ENCODE measurements at regions of chr2 and their contacts with region 1.

Region 1: DNA sequence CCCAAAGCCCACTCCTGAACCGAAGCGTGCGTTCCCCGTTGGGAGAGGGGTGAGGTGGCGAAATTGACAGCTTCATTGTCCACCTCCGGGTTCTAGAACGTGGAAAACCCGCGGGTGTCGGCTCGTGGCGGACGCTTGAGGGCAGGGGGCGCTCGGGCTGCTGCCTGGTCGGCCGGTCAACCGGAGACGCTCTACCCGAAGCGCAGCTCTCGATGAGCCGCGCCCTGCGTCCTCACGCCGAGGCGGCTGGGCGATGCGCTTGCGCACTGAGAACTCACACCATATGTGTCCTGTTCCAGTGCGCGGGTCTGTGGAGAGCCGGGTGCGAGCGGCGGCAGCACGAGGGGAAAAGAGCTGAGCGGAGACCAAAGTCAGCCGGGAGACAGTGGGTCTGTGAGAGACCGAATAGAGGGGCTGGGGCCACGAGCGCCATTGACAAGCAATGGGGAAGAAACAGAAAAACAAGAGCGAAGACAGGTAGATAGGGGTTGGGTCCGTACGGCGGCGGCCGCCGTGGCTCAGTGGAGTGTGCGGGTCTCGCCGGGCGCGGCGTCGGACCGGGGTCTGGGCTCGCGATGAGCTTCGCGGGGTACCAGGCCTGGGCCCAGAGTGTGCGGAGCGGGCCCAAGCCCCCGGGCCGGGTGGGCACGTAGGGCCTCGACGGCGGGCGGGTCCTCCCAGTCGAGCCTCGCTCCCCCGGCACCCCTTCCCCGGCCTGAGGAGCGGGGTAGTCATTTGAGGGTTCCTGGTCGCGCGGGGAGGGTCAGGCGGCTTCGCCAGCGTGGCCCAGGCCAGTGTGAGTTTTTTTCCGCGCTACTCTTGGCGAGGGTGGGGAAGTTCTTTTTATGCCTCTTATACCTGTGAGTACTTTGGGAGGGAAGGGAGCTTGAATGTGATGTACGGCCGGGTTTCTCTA is at the start of gene EIF5B:
- DNase-seq: peak; percentile 95
- ATAC-seq: peak; percentile 71
- H3K4me3 Mint-ChIP-seq: no peak within 1 kb of the TSS
- H3K27ac Mint-ChIP-seq: no peak within 1 kb of the TSS
- H3K4me1 Mint-ChIP-seq: peaks cover 47% of the 10 kb centered on the region
- H3K27me3 Mint-ChIP-seq: no peaks in the 10 kb centered on the region
- total RNA-seq, gene EIF5B: 79.0 to 95.4 TPM

Region 2: GRCh38 chr2:97718051-97718882 is 1619.1 kb before region 1 on chr2:
- CTCF ChIA-PET with region 1: no interaction called
- POLR2A ChIA-PET with region 1: no interaction called
- intact Hi-C with region 1: loop called in 1 of 2 experiments (anchors 10 kb)
- DNase-seq: peak; percentile 86
- ATAC-seq: peak; percentile 77
- H3K4me3 Mint-ChIP-seq: peak overlapping the region; percentile 71
- H3K27ac Mint-ChIP-seq: peak overlapping the region; percentile 95
- H3K4me1 Mint-ChIP-seq: peaks cover 68% of the 10 kb centered on the region
- H3K27me3 Mint-ChIP-seq: no peaks in the 10 kb centered on the region

Region 3: GRCh38 chr2:98280376-98281102 is 1056.8 kb before region 1 on chr2:
- CTCF ChIA-PET with region 1: no interaction called
- POLR2A ChIA-PET with region 1: no interaction called
- intact Hi-C with region 1: no loop called
- DNase-seq: no peak
- ATAC-seq: no peak
- H3K4me3 Mint-ChIP-seq: no peak overlapping the region
- H3K27ac Mint-ChIP-seq: no peak overlapping the region
- H3K4me1 Mint-ChIP-seq: no peaks in the 10 kb centered on the region
- H3K27me3 Mint-ChIP-seq: peaks cover 25% of the 10 kb centered on the region

Region 4: DNA sequence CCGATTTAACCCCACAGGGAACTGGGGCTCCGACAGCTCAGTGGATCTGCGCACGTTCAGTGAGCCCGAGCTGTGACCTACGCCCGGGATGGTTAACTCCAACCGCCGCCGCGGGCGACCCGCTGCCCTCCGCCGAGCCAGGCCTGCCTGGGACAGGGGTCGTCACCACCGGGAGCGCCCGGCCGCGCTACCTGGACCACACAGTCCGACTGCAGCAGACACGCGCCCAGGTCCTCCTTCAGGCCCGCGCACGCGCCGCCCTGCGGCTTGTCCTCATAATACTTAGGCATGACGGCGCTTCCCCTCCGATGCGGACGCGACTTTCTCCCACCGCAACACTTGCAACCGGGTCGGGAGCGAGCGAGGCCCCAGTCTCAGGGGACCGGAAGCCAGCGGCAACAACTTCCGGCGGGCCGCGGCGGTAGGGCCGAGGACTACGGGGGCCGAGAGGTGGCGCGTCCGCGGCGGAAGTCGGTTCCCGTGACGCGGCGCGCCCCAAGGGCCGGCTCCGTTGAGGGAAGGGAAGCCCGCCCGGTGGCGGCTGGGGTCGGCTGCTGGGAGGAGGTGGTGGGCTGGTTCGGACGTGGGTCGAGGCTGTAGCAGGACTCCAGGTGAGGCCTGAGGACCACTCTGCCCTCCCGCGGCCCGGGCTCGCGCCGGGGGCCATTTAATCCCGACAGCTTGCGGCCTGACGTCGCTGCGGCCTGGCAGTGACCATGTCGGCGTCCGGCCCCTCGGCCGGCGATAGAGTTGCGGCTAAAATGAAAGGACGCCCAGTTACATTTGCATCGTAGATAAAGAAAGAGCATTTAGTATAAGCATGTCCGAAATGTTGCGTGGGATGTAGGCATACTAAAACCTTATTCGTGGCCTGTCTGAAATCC is 729.0 kb before region 1 on chr2 and contains the starts of genes COA5 and UNC50:
- CTCF ChIA-PET with region 1: no interaction called
- POLR2A ChIA-PET with region 1: no interaction called
- intact Hi-C with region 1: loop called (anchors 1 to 5 kb)
- DNase-seq: peak; percentile 95
- ATAC-seq: peak; percentile 91
- H3K4me3 Mint-ChIP-seq: peak within 1 kb of the TSS; percentile 83
- H3K27ac Mint-ChIP-seq: peak within 1 kb of the TSS; percentile 94
- H3K4me1 Mint-ChIP-seq: peaks cover 61% of the 10 kb centered on the region
- H3K27me3 Mint-ChIP-seq: no peaks in the 10 kb centered on the region
- total RNA-seq, gene COA5: 17.7 to 33.2 TPM
- total RNA-seq, gene UNC50: 21.1 to 31.4 TPM

Region 5: GRCh38 chr2:99154643-99155536 is 182.5 kb before region 1 on chr2 and contains the starts of genes LIPT1 and TSGA10:
- CTCF ChIA-PET with region 1: interaction called, 3 read pairs
- POLR2A ChIA-PET with region 1: interaction called, 6 read pairs
- intact Hi-C with region 1: loop called (anchors 1 kb)
- DNase-seq: peak; percentile 96
- ATAC-seq: peak; percentile 94
- H3K4me3 Mint-ChIP-seq: no peak within 1 kb of the TSS
- H3K27ac Mint-ChIP-seq: peak within 1 kb of the TSS; percentile 93
- H3K4me1 Mint-ChIP-seq: peaks cover 36% of the 10 kb centered on the region
- H3K27me3 Mint-ChIP-seq: no peaks in the 10 kb centered on the region
- total RNA-seq, gene LIPT1: 4.6 to 4.7 TPM
- total RNA-seq, gene TSGA10: 6.4 to 9.4 TPM

Region 6: GRCh38 chr2:99377879-99378278 is 40.5 kb after region 1 on chr2:
- CTCF ChIA-PET with region 1: interaction called, 4 read pairs
- POLR2A ChIA-PET with region 1: no interaction called
- intact Hi-C with region 1: loop called in 1 of 2 experiments (anchors 1 kb)
- DNase-seq: no peak
- ATAC-seq: peak; percentile 87
- H3K4me3 Mint-ChIP-seq: no peak overlapping the region
- H3K27ac Mint-ChIP-seq: peak overlapping the region; percentile 65
- H3K4me1 Mint-ChIP-seq: peaks cover 40% of the 10 kb centered on the region
- H3K27me3 Mint-ChIP-seq: no peaks in the 10 kb centered on the region

Region 7: GRCh38 chr2:99404039-99404794 is 66.8 kb after region 1 on chr2:
- CTCF ChIA-PET with region 1: no interaction called
- POLR2A ChIA-PET with region 1: no interaction called
- intact Hi-C with region 1: no loop called
- DNase-seq: no peak
- ATAC-seq: no peak
- H3K4me3 Mint-ChIP-seq: no peak overlapping the region
- H3K27ac Mint-ChIP-seq: peak overlapping the region; percentile 49
- H3K4me1 Mint-ChIP-seq: peaks cover 11% of the 10 kb centered on the region
- H3K27me3 Mint-ChIP-seq: no peaks in the 10 kb centered on the region

Region 8: GRCh38 chr2:101001691-101002561 is 1664.6 kb after region 1 on chr2 and contains the start of gene RPL31:
- CTCF ChIA-PET with region 1: no interaction called
- POLR2A ChIA-PET with region 1: no interaction called
- intact Hi-C with region 1: loop called in 1 of 2 experiments (anchors 2 kb)
- DNase-seq: peak; percentile 98
- ATAC-seq: peak; percentile 95
- H3K4me3 Mint-ChIP-seq: peak within 1 kb of the TSS; percentile 99
- H3K27ac Mint-ChIP-seq: peak within 1 kb of the TSS; percentile 97
- H3K4me1 Mint-ChIP-seq: peaks cover 41% of the 10 kb centered on the region
- H3K27me3 Mint-ChIP-seq: no peaks in the 10 kb centered on the region
- total RNA-seq, gene RPL31: 889 to 1,817 TPM